Right ventricle myocardium superior (tissue), 1 donor: ENCODE measurements at regions of chr3 and their contacts with region 1.

Region 1: GRCh38 chr3:29764603-29765254 is 483.9 kb downstream of the RBMS3 start:
- DNase-seq: no peak
- ATAC-seq: peak; percentile 84

Region 2: GRCh38 chr3:29144807-29145206 is 619.9 kb before region 1 on chr3:
- intact Hi-C with region 1: loop called (anchors 10 kb)
- DNase-seq: peak; percentile 46
- ATAC-seq: peak; percentile 81

Region 3: DNA sequence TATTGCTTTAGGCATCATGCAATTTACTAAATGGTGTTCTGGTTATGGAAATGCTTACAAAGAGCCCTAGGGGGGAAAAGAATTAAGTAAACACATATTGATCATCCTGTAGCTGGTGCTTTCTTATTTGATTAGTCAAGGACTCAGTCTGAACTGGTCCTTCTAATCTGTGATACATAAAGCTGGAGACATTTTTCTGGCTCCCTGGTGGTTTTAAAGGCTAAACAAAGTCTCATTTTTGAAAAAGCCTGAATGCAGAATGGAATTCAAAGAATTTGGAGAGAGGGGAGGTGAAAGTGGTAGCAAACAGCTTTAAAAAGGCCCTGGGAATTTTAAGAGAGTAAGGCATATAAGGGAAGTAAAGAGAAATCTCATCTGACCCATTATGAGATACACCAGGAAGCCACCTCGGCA is 334.2 kb before region 1 on chr3:
- intact Hi-C with region 1: loop called (anchors 10 kb)
- DNase-seq: no peak
- ATAC-seq: no peak